ENCODE measurements at regions of chr9 and their contacts with region 1.

Region 1: DNA sequence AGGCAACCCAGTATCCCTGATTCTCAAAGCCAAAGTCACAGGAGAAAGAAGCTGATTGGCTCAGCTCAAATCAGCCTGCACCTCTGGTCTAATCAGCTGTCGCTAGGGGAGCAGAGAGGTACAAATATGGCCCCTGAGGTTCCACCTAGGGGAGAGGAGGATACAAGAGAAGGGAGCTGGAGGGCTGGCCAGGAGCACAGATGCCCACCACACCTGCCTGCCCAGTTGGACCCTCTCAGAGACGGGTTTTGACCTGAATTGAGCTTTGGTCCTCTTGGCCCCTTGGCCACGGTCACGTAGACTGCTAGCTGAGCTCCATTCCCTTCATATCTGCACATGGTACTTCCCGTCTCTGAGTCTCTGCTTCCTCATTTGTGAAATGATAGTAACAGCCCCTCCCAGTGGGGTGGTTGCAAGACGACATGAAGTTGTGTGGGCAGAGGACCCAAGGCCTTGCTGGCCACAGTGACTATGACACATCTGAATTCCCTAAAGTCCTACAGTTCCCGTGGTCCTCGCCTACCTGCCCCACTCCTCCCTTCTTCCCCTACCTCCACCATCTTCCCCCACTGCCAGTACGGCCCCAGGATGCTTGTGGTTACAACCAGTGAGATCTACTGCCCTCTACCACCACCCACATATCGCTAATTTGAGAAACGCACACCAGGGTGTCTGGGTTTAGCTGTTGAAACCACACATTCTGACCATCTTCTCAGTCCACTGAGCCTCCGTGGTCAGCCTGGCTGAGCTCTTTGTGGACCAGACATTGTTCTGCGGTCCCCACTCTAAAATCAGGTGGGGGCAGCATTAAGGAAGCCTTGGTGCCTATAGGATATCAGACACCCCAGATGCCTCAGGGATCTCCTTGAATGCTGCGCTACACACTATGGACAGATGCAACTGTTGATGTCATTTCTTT is 60.3 kb upstream of the NEK6 start:
- DNase-seq: peak in 1 of 2 donors; percentile 76
- H3K4me3 ChIP-seq: no peak overlapping the region
- CTCF ChIP-seq: no peak
- POLR2A ChIP-seq: no peak

Region 2: DNA sequence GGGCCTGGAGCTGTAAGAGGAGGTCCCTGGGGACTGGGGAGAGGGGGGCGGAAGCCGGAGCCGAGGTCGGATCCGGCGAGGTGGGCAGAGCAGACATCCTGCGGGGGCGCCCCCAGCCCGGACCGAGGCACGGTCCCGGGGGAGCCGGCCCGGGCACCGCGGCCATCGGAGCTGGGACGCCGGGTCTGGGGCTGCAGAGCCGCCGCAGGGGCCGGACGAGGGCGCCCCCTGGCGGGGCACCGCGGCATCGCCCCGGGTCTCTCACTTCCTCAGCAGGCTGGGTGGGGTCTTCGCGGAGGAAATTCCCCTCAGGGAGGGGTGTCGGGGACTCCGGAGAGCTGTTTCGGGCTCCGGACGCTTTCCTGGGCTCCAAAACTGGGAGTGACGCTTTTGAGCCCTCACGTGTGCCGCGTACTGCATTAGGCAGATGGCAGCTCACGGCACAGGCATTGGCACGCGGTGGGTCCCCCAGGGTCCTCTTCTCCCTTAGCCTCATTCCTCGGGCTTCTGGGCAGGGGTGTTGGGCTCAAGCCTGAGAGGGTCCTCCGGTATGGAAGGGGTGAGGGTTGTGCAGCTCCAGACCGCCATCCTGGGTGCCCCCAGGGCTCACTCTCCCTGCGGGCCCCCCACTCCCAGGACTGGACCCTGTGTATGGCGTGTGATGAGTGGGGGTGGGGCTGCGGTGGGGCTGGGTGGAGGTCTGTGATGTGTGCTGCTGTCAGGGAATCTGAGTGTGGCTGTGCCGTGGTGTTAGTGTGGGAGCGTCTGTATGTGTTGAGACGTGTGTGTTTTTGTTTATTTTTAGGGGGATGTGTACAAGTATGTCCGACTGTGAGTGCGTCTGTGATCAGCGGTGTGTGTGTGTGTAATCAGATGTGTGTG is 156.3 kb before region 1 on chr9:
- intact Hi-C with region 1: no loop called
- DNase-seq: peak; percentile 32 to 88
- H3K4me3 ChIP-seq: no peak overlapping the region
- CTCF ChIP-seq: no peak
- POLR2A ChIP-seq: no peak

Region 3: DNA sequence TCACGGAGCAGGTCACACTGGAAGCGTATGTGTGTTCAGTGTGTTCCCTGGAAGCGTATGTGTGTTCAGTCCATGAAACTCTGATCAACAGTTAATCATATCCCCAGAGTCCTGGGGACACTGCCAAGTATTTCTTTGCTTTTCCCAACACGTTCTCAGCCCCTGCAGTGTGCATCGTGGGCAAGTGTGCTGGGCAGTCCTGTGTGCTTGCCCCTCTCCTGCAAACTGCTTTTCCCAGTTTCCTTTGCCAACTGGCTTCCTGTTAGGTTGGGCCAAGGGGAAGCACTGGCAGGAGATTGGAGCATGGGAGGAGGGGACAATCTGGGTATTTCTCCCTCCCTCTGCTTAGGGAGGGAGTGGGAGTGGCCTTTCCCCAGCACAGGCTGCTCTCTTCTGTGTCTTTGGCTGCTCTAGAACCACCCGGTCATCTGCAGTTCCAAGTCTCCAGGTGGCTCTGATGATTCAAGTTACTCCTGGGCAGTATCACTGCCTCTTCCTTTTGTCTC is 23.6 kb after region 1 on chr9:
- intact Hi-C with region 1: loop called (anchors 1 kb)
- DNase-seq: peak in 1 of 2 donors; percentile 70
- H3K4me3 ChIP-seq: no peak overlapping the region
- CTCF ChIP-seq: no peak
- POLR2A ChIP-seq: no peak

Measured in lower leg skin (tissue), 4 donors.